H1 (cell line): ENCODE measurements at regions of chr22 and their contacts with region 1.

Region 1: GRCh38 chr22:38017272-38017920 is 33.0 kb upstream of the SOX10 start:
- DNase-seq: no peak
- H3K4me3 ChIP-seq: no peak overlapping the region
- H3K27ac ChIP-seq: no peak overlapping the region
- H3K4me1 ChIP-seq: peaks cover 0 to 15% (median 2%) of the 10 kb centered on the region in 4 experiments; a peak in 3 of 7 replicates
- H3K27me3 ChIP-seq: no peaks in the 10 kb centered on the region; a peak in 1 of 7 replicates
- CTCF ChIP-seq: peak; percentile 8 to 32 (median 19); a peak in 2 of 4 replicates
- EP300 ChIP-seq: no peak
- POLR2A ChIP-seq: no peak
- RAD21 ChIP-seq: peak in 1 of 2 experiments; percentile 33; a peak in 1 of 4 replicates

Region 2: GRCh38 chr22:37973271-37974170 is 43.9 kb before region 1 on chr22:
- CTCF ChIA-PET with region 1: no interaction called
- POLR2A ChIA-PET with region 1: no interaction called
- DNase-seq: no peak
- H3K4me3 ChIP-seq: no peak overlapping the region
- H3K27ac ChIP-seq: no peak overlapping the region
- H3K4me1 ChIP-seq: peaks cover 6 to 18% (median 11%) of the 10 kb centered on the region in 4 experiments
- H3K27me3 ChIP-seq: no peaks in the 10 kb centered on the region
- CTCF ChIP-seq: no peak
- EP300 ChIP-seq: no peak
- POLR2A ChIP-seq: no peak
- RAD21 ChIP-seq: no peak

Region 3: GRCh38 chr22:38034274-38034882 is 17.0 kb after region 1 on chr22:
- CTCF ChIA-PET with region 1: interaction called, 12 read pairs
- POLR2A ChIA-PET with region 1: interaction called, 7 read pairs
- DNase-seq: peak; percentile 56 to 70
- H3K4me3 ChIP-seq: peak overlapping the region in 2 of 4 experiments; percentile 4 to 19; a peak in 2 of 8 replicates
- H3K27ac ChIP-seq: peak overlapping the region; percentile 61; the same call in 1 of the 2 replicates
- H3K4me1 ChIP-seq: peaks cover 0 to 33% (median 22%) of the 10 kb centered on the region in 4 experiments; a peak in 6 of 7 replicates
- H3K27me3 ChIP-seq: peaks cover 0 to 4% (median under 1%) of the 10 kb centered on the region in 4 experiments; a peak in 1 of 7 replicates
- CTCF ChIP-seq: 0 out of 4 replicates have a peak, but pooled peaks of 1 of the 3 experiments have one; percentile 2
- EP300 ChIP-seq: 0 out of 3 replicates have a peak, but pooled peaks of 1 of the 2 experiments have one; percentile 20
- POLR2A ChIP-seq: no peak
- RAD21 ChIP-seq: peak; percentile 7 to 33; a peak in 1 of 4 replicates